ENCODE measurements at regions of chr5 and their contacts with region 1.

Region 1: GRCh38 chr5:14364576-14365472 is 216.8 kb upstream of the OTULINL start:
- DNase-seq: peak; percentile 24
- H3K4me3 Mint-ChIP-seq: no peak overlapping the region
- H3K27ac Mint-ChIP-seq: peak overlapping the region; percentile 59
- H3K4me1 Mint-ChIP-seq: peaks cover 51% of the 10 kb centered on the region
- H3K27me3 Mint-ChIP-seq: peaks cover 2% of the 10 kb centered on the region

Region 2: GRCh38 chr5:14351845-14352712 is 12.7 kb before region 1 on chr5:
- CTCF ChIA-PET with region 1: interaction called, 19 read pairs
- POLR2A ChIA-PET with region 1: interaction called, 3 read pairs
- DNase-seq: peak; percentile 68
- H3K4me3 Mint-ChIP-seq: no peak overlapping the region
- H3K27ac Mint-ChIP-seq: no peak overlapping the region
- H3K4me1 Mint-ChIP-seq: peaks cover 8% of the 10 kb centered on the region
- H3K27me3 Mint-ChIP-seq: peaks cover 5% of the 10 kb centered on the region

Region 3: DNA sequence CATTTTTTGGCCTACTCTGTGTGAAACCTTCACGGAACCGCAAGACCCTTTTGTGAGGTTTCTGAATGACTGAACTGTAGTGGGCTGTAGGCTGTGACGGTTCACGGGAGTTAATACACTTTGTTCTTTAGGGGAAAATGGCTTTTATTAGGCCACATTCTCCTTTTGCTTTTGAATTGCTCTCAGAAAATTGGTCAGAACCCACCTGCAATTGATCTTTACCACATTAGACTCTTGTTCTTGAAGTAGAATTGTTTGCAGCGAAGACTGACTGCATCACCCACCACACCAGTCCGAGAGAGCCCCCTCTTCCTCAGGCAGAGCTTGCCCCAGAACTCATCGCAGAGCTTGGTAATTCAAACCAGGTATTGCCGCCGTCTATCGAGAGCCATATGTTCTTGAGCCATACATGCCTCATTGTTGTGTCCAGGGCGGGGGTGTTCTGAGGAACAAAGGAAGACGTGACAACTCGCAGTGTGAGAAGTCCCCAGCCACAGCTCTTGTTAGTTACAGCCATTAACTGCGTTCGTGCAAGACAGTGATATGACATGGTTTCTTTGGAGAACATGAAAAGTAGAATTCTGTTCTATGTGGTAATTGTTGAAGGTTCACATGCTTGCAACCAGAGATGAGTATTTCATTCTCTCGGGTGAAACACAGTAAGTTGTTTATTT is 50.3 kb after region 1 on chr5:
- CTCF ChIA-PET with region 1: interaction called, 4 read pairs
- POLR2A ChIA-PET with region 1: interaction called, 19 read pairs
- DNase-seq: peak; percentile 24
- H3K4me3 Mint-ChIP-seq: peak overlapping the region; percentile 51
- H3K27ac Mint-ChIP-seq: peak overlapping the region; percentile 77
- H3K4me1 Mint-ChIP-seq: peaks cover 46% of the 10 kb centered on the region
- H3K27me3 Mint-ChIP-seq: peaks cover 10% of the 10 kb centered on the region

Region 4: DNA sequence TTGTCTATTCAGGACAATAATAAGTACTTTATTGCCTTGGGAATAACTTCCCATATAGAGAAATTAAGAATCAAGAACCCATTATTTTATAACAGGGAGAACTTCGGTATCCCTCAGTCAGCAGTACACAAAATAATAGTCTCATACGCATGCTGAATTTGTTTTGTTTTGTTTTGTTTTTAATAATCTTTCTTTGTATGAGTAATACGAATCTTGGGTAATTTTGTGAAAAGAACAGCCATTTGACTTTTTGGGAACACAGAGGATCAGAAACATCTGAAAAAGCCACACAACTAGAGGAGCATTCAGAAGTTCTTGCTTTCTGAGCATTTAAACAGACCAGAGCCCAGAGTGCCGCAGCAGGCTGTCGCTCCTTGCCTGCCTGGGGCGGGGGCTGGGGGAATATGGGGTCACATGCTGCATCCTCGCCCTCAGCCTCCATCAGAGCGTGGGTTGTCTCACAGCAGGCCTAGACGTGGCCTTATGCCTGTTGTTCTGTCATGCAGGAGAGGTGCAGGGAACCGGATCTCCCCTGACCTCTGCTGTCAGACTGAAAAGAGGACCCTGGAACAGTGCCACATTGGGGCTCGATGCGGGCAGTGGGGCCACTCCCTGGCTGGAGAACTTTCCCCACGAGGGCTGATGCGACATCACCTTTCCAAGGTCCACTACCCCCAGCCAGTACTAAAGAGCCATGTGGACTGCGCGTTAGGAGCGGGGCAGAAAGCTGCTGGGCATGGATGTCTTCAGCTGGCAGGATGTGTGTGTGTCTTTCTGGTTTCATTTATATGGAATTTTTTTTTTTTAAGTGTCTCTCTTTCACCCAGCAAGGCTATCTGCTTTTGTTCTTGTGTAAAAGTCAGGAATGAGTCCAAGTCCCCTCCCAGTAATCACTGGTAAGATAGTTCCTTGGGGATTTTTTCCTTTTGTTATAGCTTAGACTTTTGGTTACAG is 83.4 kb after region 1 on chr5:
- CTCF ChIA-PET with region 1: no interaction called
- POLR2A ChIA-PET with region 1: no interaction called
- DNase-seq: no peak
- H3K4me3 Mint-ChIP-seq: no peak overlapping the region
- H3K27ac Mint-ChIP-seq: no peak overlapping the region
- H3K4me1 Mint-ChIP-seq: peaks cover 14% of the 10 kb centered on the region
- H3K27me3 Mint-ChIP-seq: peaks cover 13% of the 10 kb centered on the region

Region 5: GRCh38 chr5:14595189-14595588 is 230.4 kb after region 1 on chr5:
- CTCF ChIA-PET with region 1: interaction called, 10 read pairs
- POLR2A ChIA-PET with region 1: interaction called, 24 read pairs
- DNase-seq: peak; percentile 56
- H3K4me3 Mint-ChIP-seq: peak overlapping the region; percentile 53
- H3K27ac Mint-ChIP-seq: peak overlapping the region; percentile 95
- H3K4me1 Mint-ChIP-seq: peaks cover 84% of the 10 kb centered on the region
- H3K27me3 Mint-ChIP-seq: no peaks in the 10 kb centered on the region

Region 6: GRCh38 chr5:14655146-14655741 is 290.4 kb after region 1 on chr5:
- CTCF ChIA-PET with region 1: interaction called, 214 read pairs
- POLR2A ChIA-PET with region 1: interaction called, 4 read pairs
- DNase-seq: no peak
- H3K4me3 Mint-ChIP-seq: no peak overlapping the region
- H3K27ac Mint-ChIP-seq: no peak overlapping the region
- H3K4me1 Mint-ChIP-seq: peaks cover 14% of the 10 kb centered on the region
- H3K27me3 Mint-ChIP-seq: peaks cover 21% of the 10 kb centered on the region